ENCODE measurements at regions of chr7 and their contacts with region 1.

Region 1: DNA sequence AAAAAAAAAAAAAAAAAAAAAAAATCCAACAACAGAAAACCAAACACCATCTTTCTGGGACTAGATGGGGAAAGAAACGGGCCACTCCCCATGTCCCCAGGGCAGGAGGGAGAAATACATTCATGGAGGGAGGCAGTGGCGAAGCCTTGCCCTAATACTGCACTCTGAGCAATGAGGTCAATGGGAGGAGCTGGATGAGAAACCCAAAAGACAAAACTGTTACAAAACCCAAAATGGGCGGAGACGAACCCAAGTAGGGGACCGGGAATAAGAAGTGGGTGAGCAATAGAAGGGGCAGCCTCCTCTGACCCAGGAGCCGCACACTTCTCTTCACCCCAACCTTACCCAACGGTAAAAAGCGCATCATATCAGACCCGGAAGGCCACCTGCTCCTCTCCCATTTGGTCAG is 6.6 kb downstream of the GNB2 start:
- DNase-seq: no peak
- ATAC-seq: peak; percentile 31
- H3K4me3 ChIP-seq: no peak overlapping the region
- H3K27ac ChIP-seq: peak overlapping the region; percentile 75
- H3K4me1 ChIP-seq: peaks cover 57% of the 10 kb centered on the region
- H3K27me3 ChIP-seq: no peaks in the 10 kb centered on the region
- CTCF ChIP-seq: no peak

Region 2: DNA sequence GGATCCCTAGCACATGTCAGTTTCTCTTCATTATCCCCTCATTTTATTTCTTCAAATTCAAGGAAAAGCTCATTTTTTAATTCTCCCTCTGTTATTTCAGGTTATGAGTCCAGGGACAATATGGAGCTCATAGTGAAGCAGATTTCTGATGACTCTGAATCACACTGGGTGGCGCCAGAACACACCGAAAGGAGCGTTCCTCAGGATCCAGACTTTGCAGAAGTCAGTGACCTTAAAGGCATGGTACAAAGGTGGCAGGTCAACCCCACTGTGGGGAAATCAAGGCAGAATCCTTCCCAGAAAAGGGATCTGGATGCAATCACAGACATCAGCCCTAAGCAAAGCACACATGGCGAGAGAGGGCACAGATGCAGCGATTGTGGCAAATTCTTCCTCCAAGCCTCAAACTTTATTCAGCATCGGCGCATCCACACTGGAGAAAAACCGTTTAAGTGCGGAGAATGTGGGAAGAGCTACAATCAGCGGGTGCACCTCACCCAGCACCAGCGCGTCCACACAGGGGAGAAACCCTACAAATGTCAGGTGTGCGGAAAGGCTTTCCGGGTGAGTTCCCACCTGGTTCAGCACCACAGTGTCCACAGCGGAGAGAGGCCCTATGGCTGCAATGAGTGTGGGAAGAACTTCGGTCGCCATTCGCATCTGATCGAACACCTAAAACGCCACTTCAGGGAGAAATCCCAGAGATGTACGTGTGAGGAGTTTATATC is 1154.3 kb before region 1 on chr7:
- CTCF ChIA-PET with region 1: no interaction called
- POLR2A ChIA-PET with region 1: no interaction called
- in situ Hi-C with region 1: no loop called
- intact Hi-C with region 1: no loop called
- DNase-seq: no peak
- ATAC-seq: no peak; the same call in 1 of the 2 replicates
- H3K4me3 ChIP-seq: no peak overlapping the region
- H3K27ac ChIP-seq: no peak overlapping the region
- H3K4me1 ChIP-seq: no peaks in the 10 kb centered on the region
- H3K27me3 ChIP-seq: no peaks in the 10 kb centered on the region
- CTCF ChIP-seq: no peak

Region 3: DNA sequence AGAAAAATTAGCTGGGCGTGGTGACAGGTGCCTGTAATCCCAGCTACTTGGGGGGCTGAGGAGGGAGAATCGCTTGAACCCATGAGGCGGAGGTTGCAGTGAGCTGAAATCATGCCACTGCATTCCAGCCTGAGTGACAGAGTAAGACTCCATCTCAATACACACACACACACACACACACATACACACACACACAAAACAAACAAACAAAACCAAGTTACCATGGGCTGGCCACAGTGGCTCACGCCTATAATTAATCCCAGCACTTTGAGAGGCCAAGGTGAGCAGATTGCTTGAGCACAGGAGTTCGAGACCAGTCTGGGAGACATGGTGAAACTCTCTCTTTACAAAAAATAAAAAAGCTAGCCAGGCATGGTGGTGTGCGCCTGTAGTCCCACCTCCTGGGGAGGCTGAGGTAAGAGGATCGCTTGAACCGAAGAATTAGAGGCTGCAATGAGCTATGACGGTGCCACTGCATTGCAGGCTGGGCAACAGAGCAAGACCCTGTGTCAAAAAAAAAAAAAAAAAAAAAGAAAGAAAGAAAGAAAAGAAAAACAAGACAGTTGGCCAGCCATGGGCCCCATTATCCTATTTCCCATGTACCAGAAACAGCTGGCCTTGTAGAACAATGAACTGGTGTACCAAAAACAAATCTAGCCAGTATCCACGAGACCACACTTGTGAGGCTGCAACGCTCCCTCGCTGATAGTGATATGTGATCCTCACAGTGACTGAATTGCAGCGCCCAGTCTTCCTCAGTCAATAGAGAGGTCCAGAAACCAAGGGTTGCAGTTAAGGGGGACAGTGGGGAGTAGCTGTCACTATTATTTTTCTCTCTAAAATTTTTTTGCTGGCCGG is 147.8 kb before region 1 on chr7:
- CTCF ChIA-PET with region 1: no interaction called
- POLR2A ChIA-PET with region 1: no interaction called
- in situ Hi-C with region 1: no loop called
- intact Hi-C with region 1: no loop called
- DNase-seq: no peak
- ATAC-seq: no peak
- H3K4me3 ChIP-seq: no peak overlapping the region
- H3K27ac ChIP-seq: no peak overlapping the region
- H3K4me1 ChIP-seq: no peaks in the 10 kb centered on the region
- H3K27me3 ChIP-seq: no peaks in the 10 kb centered on the region
- CTCF ChIP-seq: no peak

Region 4: DNA sequence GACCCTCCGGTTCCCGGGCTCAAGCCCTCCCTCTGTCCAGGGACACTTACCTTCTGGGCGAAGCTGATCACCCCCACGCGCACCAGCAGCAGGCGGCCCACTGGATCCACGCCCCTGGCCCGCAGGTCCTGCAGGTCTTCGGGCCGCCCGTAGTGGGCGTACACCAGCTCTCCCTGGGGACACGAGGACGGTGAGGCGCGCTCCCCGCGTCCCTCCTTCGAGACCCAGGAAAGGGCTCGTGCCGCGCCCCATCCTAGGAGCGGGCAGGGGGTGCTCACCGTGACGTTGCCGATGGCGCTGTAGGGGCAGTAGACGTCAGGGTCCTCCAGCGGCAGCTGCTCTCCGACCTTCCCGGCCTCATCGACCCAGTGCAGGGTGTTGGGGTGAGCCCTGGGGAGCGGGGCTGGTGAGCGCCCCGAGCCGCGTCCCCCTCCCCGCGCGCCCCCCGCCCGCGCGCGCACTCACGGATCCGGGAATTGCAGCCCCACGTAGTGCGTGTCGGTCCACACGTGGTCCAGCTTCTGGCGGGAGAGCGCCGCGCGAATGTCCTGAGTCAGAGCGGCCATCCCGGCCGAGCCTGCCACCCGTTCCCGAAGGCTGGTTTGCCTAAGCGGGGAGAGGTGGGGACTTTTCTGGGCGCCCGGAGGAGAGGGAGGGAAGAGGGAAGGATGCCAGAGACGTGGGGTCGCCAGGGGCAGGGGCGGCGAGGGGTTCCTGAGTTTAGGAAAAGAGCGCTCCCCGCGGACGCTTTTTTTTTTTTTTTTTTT is 47.0 kb before region 1 on chr7:
- CTCF ChIA-PET with region 1: interaction called, 3 read pairs
- POLR2A ChIA-PET with region 1: no interaction called
- in situ Hi-C with region 1: no loop called
- intact Hi-C with region 1: loop called (anchors 10 kb)
- DNase-seq: no peak
- ATAC-seq: peak; percentile 85
- H3K4me3 ChIP-seq: peak overlapping the region; percentile 59 to 62
- H3K27ac ChIP-seq: peak overlapping the region; percentile 76
- H3K4me1 ChIP-seq: no peaks in the 10 kb centered on the region
- H3K27me3 ChIP-seq: no peaks in the 10 kb centered on the region
- CTCF ChIP-seq: peak; percentile 74

Region 5: DNA sequence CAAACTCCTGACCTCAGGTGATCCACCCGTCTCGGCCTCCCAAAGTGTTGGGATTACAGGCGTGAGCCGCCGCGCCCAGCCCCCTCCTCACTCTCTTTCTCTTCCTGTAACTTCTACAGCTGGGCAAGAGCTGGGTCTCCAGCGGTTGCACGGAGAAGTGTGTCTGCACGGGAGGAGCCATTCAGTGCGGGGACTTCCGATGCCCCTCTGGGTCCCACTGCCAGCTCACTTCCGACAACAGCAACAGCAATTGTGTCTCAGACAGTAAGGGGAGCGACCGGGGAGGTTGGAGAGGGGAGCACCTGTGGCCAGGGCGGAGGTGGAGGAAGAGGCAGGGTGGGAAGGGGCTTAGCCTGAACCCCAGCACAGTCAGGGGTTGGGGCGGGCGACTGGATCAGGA is 105.7 kb after region 1 on chr7:
- CTCF ChIA-PET with region 1: no interaction called
- POLR2A ChIA-PET with region 1: interaction called, 18 read pairs
- in situ Hi-C with region 1: no loop called
- intact Hi-C with region 1: no loop called
- DNase-seq: no peak
- ATAC-seq: no peak
- H3K4me3 ChIP-seq: no peak overlapping the region
- H3K27ac ChIP-seq: no peak overlapping the region
- H3K4me1 ChIP-seq: no peaks in the 10 kb centered on the region
- H3K27me3 ChIP-seq: no peaks in the 10 kb centered on the region
- CTCF ChIP-seq: no peak

Measured in Panc1 (cell line).